Heart left ventricle (tissue), 16 donors: ENCODE measurements at regions of chr9 and their contacts with region 1.

Region 1: DNA sequence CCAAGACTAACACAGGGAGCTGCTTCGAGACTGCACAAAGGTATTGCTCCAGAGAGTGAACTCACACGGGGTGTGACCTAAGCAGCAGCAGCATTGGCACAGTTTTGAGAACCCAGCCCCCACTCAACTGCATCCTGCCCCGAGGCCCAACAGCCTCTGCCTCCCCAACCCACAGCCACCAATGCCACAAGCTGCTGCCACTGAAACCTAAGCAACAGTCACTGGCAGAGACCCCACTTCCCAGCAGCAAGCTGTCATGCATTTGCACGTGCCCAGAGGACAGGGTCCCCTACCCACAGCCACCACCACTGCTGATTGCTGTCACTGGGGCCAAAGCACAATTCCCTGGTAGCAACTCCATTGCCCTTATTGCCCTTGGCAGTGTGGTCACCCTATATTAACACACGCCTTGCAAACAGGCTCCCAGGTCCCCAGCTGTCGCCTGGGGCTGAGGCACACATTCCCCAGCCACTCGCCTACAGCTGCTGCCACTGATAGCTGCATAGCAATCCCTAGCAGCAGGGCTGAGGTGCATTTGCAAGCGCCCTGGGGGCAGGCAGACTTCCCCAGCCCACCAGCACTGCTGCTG is 141.0 kb downstream of the AGTPBP1 start:
- DNase-seq: peak in 2 of 5 donors; percentile 29 to 46
- ATAC-seq: peak; percentile 19 to 80 (median 76)
- H3K4me3 ChIP-seq: no peak overlapping the region
- H3K27ac ChIP-seq: no peak overlapping the region
- H3K4me1 ChIP-seq: peaks cover 0 to 23% (median 7%) of the 10 kb centered on the region in 12 donors
- H3K27me3 ChIP-seq: no peaks in the 10 kb centered on the region
- CTCF ChIP-seq: no peak
- POLR2A ChIP-seq: no peak

Region 2: GRCh38 chr9:84397151-84397728 is 1203.5 kb before region 1 on chr9:
- intact Hi-C with region 1: loop called in 3 of 10 experiments (anchors 5 to 10 kb)
- DNase-seq: peak in 4 of 5 donors; percentile 37 to 63 (median 54)
- ATAC-seq: peak in 3 of 4 donors; percentile 80 to 84 (median 81)
- H3K4me3 ChIP-seq: no peak overlapping the region
- H3K27ac ChIP-seq: no peak overlapping the region
- H3K4me1 ChIP-seq: peaks cover 0 to 9% (median 0%) of the 10 kb centered on the region in 12 donors
- H3K27me3 ChIP-seq: peaks cover 0 to 14% (median 0%) of the 10 kb centered on the region in 9 donors
- CTCF ChIP-seq: peak; percentile 87 to 96 (median 93)
- POLR2A ChIP-seq: no peak

Region 3: DNA sequence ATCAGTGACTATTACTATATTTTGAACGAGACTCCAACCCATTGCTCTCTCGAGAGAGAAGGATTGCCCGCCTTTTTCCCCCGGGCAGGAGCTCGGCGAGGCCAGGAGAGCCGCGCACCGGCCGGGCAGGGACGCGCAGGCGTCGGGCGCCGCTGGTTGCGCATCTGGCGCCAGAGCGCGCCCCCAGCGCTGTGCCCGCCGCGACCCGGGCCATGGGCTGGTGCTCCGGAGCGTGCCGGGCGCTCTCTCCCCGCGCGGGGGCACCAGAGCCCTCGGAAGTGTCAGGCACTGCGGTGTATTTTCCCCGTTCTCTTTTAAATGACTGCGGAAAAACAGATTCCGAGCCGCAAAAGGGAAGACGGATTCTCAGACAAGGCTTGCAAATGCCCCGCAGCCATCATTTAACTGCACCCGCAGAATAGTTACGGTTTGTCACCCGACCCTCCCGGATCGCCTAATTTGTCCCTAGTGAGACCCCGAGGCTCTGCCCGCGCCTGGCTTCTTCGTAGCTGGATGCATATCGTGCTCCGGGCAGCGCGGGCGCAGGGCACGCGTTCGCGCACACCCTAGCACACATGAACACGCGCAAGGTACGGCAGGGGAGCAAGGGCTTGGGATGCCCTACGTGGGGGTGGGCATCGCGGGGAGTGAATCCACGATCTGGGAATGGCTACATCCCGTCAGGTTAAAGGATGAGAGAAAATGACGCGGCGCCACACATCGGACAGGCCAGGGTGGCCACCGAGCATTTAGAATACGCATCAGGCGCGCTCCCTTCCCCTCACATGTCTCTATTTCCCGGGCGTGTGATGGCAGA is 932.4 kb before region 1 on chr9:
- intact Hi-C with region 1: loop called in 1 of 10 experiments (anchors 10 kb)
- DNase-seq: peak; percentile 51 to 78 (median 68)
- ATAC-seq: peak; percentile 71 to 94 (median 92)
- H3K4me3 ChIP-seq: peak overlapping the region; percentile 24 to 65 (median 54)
- H3K27ac ChIP-seq: peak overlapping the region in 3 of 12 donors; percentile 8 to 41 (median 24)
- H3K4me1 ChIP-seq: peaks cover 0 to 34% (median 11%) of the 10 kb centered on the region in 12 donors
- H3K27me3 ChIP-seq: peaks cover 0 to 49% (median 16%) of the 10 kb centered on the region in 9 donors
- CTCF ChIP-seq: peak; percentile 28 to 75 (median 58)
- POLR2A ChIP-seq: no peak

Region 4: DNA sequence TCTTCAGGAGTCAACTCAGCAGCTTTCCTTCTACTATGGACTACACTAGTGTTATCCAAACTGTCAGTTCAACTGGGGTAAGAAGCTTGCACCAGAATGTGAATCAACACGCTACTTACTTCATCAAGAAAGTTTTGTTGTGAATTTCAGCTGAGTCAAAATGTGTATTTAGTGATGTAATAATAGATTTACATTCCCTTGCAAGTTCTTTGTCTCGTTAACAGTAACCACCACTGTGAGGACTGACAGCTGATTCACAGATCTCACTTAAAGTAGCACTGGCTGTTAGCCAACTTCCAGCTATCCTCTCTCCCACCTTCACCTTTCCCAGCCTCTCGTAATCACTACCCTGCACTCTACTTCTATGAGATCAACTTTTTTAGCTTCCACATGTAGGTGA is 486.0 kb before region 1 on chr9:
- intact Hi-C with region 1: loop called in 1 of 10 experiments (anchors 10 kb)
- DNase-seq: no peak
- ATAC-seq: no peak
- H3K4me3 ChIP-seq: no peak overlapping the region
- H3K27ac ChIP-seq: no peak overlapping the region
- H3K4me1 ChIP-seq: no peaks in the 10 kb centered on the region
- H3K27me3 ChIP-seq: no peaks in the 10 kb centered on the region
- CTCF ChIP-seq: no peak
- POLR2A ChIP-seq: no peak

Region 5: GRCh38 chr9:85508616-85509015 is 92.2 kb before region 1 on chr9:
- intact Hi-C with region 1: loop called in 1 of 10 experiments (anchors 10 kb)
- DNase-seq: no peak
- ATAC-seq: no peak
- H3K4me3 ChIP-seq: no peak overlapping the region
- H3K27ac ChIP-seq: no peak overlapping the region
- H3K4me1 ChIP-seq: no peaks in the 10 kb centered on the region
- H3K27me3 ChIP-seq: no peaks in the 10 kb centered on the region
- CTCF ChIP-seq: peak in 3 of 12 donors; percentile 7 to 24 (median 11)
- POLR2A ChIP-seq: no peak

Region 6: DNA sequence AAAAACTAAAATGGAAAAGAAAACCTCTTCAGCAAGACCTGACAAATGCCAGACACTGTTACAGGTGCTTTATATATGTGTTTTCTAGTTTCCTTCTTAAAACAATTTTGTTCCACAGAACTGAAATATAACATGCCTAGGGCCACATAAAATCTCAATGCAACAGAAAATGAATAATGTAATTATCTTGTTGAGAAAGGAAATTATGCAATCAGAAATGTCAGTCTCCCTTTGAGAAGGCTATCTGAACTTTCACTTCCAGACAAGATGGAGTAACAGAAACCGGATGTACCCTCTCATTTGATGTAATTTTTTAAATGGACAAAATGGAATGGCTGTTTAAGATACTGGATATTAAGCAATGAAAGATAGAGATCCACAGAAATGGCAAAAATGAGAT is 61.8 kb after region 1 on chr9:
- intact Hi-C with region 1: no loop called
- DNase-seq: no peak
- ATAC-seq: no peak
- H3K4me3 ChIP-seq: no peak overlapping the region
- H3K27ac ChIP-seq: no peak overlapping the region
- H3K4me1 ChIP-seq: peaks cover 0 to 4% (median 0%) of the 10 kb centered on the region in 12 donors
- H3K27me3 ChIP-seq: no peaks in the 10 kb centered on the region
- CTCF ChIP-seq: no peak
- POLR2A ChIP-seq: no peak